ENCODE measurements at regions of chr10 and their contacts with region 1.

Region 1: DNA sequence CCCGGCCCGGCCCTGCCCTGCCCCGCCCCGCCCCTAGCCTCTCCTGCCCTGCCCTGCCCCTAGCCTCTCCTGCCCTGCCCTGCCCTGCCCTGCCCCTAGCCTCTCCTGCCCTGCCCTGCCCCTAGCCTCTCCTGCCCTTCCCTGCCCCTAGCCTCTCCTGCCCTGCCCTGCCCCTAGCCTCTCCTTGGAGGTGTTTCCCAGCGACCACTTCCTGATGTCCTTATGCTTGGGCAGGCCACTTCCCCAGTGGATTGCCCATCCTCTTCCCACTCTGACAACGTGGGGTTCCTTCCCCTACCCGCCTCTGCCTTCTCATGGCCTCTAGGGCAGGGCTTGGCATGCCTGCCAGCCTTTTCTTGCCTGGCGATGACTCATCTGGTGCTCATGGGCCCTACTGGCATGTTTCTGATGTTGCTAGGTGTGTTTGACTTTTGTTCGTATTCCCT is 21.2 kb downstream of the PRXL2A start:
- DNase-seq: peak; percentile 92 to 96
- H3K4me3 ChIP-seq: no peak overlapping the region
- H3K27ac ChIP-seq: peak overlapping the region; percentile 30
- H3K4me1 ChIP-seq: peaks cover 27% of the 10 kb centered on the region
- H3K27me3 ChIP-seq: no peaks in the 10 kb centered on the region
- CTCF ChIP-seq: no peak

Region 2: DNA sequence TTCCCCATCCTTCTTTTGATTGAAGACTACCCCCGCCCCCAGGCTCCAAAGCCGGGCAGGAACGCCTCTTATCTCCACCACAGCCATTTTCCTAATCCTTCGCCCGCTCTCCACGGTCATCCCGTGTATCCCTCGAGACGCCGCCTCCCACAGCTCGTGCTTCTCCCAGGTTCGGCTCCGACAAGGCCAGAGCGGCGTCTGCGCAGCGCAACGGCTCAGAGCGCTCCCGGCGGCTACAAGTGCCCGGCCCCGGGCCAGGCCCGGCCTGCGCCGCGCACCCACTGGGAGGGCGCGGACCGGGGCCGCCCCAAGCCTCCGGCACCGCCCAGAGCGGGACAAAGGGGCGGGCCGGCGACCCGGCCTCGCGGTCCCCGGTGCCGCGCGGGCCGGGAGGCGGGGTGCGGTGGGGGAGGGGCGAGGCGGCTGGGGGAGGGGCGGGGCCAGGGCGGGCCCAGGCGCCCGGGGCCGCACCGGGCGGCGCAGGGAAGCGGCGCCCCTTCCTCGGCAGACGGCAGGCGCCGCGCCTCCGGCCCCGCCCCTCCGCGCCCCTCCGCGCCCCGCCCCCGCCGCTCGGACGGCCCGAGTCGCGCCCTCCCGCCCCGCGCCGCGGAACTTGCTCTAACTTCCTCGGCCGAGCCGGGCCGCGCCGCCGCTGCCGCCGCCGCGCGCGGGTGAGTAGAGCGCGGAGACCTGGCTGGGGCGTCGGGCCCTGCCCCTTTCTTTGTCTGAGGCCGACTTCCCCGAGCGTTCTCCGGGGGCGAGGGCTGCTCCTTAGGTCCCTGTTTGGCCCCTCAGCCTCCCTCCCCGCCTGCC is 24.4 kb after region 1 on chr10 and contains the start of gene TSPAN14:
- CTCF ChIA-PET with region 1: no interaction called
- POLR2A ChIA-PET with region 1: no interaction called
- intact Hi-C with region 1: loop called (anchors 1 kb)
- DNase-seq: peak; percentile 64 to 89
- H3K4me3 ChIP-seq: peak within 1 kb of the TSS; percentile 94
- H3K27ac ChIP-seq: peak within 1 kb of the TSS; percentile 75
- H3K4me1 ChIP-seq: peaks cover 49% of the 10 kb centered on the region
- H3K27me3 ChIP-seq: no peaks in the 10 kb centered on the region
- CTCF ChIP-seq: no peak
- total RNA-seq, gene TSPAN14: 114 and 135 TPM in 2 replicates

Region 3: GRCh38 chr10:80517416-80518134 is 88.0 kb after region 1 on chr10:
- CTCF ChIA-PET with region 1: no interaction called
- POLR2A ChIA-PET with region 1: no interaction called
- intact Hi-C with region 1: no loop called
- DNase-seq: no peak
- H3K4me3 ChIP-seq: no peak overlapping the region
- H3K27ac ChIP-seq: no peak overlapping the region
- H3K4me1 ChIP-seq: peaks cover 4% of the 10 kb centered on the region
- H3K27me3 ChIP-seq: no peaks in the 10 kb centered on the region
- CTCF ChIP-seq: no peak